Posterior cingulate gyrus (tissue), 11 donors: ENCODE measurements at regions of chr17 and their contacts with region 1.

Region 1: DNA sequence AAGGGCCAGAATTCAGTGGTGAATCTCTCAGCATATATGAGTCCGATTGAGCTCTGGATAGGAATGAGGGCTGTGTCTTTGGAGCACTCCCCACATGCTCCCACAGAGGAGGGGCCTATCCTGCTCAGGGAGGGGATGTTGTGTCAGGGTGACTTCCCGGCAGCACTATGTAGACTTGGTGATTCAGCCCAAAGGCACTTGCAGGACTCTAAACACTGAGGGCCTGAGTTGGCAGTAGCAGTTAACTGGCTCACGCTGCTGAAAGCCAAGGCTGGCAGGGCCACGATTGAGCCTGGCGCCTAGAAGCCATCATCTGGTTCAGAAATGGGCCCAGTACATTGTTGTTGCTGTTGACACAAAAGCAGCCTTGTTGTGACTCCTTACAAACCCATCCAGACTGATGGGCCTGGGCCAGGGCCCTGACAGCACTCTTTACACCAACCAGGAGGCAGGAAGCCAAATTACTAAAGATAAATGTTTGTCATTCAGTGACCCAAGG is 31.9 kb downstream of the NMT1 start:
- DNase-seq: peak; percentile 81 to 98 (median 88)

Region 2: GRCh38 chr17:45051060-45051719 is 41.8 kb before region 1 on chr17 and contains the start of gene DCAKD:
- intact Hi-C with region 1: loop called (anchors 5 kb)
- DNase-seq: peak; percentile 72 to 99 (median 90)

Region 3: GRCh38 chr17:45060797-45061605 is 32.0 kb before region 1 on chr17 and contains the start of gene NMT1:
- intact Hi-C with region 1: loop called (anchors 2 kb)
- DNase-seq: peak; percentile 95 to 100 (median 98)